H1 (cell line): ENCODE measurements at regions of chr11 and their contacts with region 1.

Region 1: DNA sequence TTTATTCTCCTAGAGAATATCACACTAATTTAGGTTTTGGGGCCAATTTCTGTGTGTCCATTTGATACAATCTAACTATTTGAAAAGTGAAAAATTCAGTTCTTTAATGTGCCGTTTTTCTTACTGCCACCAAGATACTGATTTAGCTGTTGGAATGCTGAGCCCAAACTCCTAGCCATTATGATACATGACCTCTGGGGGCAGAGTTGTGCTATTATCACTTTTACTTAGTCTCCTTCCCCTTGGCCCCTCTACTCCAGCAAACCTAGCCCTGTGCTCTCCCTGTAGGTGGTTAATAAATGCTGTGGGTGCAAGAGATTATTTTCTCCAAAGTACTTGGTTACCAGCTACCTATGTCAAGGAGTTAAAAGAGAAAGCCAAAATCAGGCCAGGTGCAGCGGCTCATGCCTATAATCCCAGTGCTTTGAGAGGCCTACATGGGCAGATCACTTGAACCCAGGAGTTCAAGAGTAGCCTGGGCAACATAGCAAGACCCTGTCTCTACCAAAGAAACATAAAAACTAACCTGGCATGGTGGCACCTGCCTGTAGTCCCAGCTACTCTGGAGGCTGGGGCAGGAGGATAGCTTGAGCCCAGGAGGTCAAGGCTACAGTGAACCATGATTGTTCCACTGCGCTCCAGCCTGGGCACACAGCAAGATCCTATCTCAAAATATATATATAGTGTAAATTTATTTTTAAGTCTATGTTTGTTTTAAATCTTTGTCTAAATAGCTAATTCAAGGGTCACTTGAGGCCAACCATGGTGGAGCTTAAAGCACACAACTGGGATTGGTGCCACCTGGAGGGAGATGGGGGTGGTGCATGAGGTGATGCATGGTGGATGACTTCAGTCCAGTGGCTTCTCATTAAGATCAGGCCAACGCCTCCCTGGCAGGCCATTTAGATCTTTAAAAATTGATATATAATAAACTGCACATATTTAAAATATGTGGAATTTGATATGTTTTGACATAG is 193.2 kb upstream of the PLET1 start:
- DNase-seq: peak; percentile 10 to 85
- H3K4me3 ChIP-seq: no peak overlapping the region
- H3K27ac ChIP-seq: no peak overlapping the region
- H3K4me1 ChIP-seq: no peaks in the 10 kb centered on the region
- H3K27me3 ChIP-seq: no peaks in the 10 kb centered on the region; a peak in 1 of 7 replicates
- CTCF ChIP-seq: peak; percentile 66 to 81 (median 73)
- EP300 ChIP-seq: no peak
- POLR2A ChIP-seq: no peak
- RAD21 ChIP-seq: peak; percentile 47 to 59

Region 2: GRCh38 chr11:111975076-111975806 is 478.6 kb before region 1 on chr11:
- CTCF ChIA-PET with region 1: no interaction called
- POLR2A ChIA-PET with region 1: no interaction called
- DNase-seq: no peak
- H3K4me3 ChIP-seq: no peak overlapping the region
- H3K27ac ChIP-seq: no peak overlapping the region
- H3K4me1 ChIP-seq: peaks cover 6 to 10% (median 7%) of the 10 kb centered on the region in 4 experiments; a peak in 6 of 7 replicates
- H3K27me3 ChIP-seq: peaks cover 0 to 3% (median 0%) of the 10 kb centered on the region in 4 experiments; a peak in 3 of 7 replicates
- CTCF ChIP-seq: peak in 1 of 3 experiments; percentile 12; a peak in 1 of 4 replicates
- EP300 ChIP-seq: no peak
- POLR2A ChIP-seq: no peak
- RAD21 ChIP-seq: no peak

Region 3: DNA sequence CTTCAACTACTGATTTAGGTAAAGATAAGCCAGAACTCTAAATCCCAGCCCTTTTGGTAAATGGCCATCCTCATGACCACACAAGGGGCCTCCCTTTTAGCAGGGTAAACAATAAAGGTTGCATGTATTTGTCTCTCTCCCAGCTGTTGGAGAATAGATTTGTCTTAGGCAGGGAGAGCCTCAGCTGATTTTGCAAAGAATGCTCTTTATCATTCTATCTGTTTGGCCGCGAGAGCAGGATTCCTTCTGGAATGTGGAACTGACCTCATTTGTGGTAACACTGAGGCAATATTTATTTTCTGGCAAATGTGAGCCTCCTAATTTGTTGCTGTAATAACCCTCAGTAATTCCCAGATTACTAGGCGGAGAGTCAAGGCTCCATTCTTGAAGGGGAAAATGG is 212.4 kb before region 1 on chr11:
- CTCF ChIA-PET with region 1: no interaction called
- POLR2A ChIA-PET with region 1: no interaction called
- DNase-seq: no peak
- H3K4me3 ChIP-seq: no peak overlapping the region
- H3K27ac ChIP-seq: no peak overlapping the region
- H3K4me1 ChIP-seq: no peaks in the 10 kb centered on the region
- H3K27me3 ChIP-seq: no peaks in the 10 kb centered on the region
- CTCF ChIP-seq: no peak
- EP300 ChIP-seq: no peak
- POLR2A ChIP-seq: no peak
- RAD21 ChIP-seq: no peak

Region 4: DNA sequence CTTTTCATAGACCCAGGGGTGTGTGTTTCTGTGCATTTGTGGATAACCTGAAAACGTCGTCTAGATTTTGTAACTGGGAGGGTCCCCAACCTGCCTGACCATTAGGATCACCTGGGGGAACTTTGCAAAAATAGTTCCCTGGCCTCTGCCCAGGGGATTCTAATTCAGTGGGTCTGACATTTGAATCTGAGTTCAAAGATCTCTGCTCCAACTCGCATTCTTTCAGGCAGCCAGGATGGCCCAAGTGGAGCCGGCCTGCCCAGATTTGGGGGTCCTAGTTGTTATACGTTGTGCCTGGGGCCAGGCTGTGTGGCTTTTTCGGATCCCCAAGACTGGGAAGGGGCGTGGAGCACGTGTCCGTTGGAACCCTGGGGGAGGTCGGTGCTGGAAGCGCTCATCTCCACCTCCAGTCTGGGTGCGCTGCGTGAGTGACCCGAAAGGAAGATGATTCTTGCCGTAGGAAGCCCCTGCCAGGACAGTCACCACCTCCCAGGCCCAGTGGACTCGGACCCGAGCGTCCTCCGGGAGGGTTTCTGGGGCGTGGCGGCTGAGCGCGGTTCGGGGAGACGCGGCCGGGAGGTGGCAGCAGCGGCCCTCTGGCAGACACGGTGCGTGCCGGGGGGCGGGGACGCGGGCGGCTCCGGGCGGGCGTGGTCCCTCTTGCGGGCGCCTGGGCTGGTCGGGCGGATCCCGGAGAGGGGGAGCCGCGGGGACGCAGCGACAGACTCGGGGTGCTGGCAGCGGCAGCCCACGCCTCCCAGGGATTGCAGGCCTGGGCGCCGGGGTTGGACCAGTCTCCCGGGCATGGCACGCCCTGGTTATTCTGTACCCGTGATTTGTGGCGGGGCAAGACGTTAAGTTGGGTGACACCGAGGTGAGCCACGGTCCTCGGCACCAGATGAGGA is 164.0 kb before region 1 on chr11:
- CTCF ChIA-PET with region 1: interaction called, 18 read pairs
- POLR2A ChIA-PET with region 1: no interaction called
- DNase-seq: peak in 1 of 2 experiments; percentile 94
- H3K4me3 ChIP-seq: peak overlapping the region; percentile 39 to 71 (median 60)
- H3K27ac ChIP-seq: no peak overlapping the region
- H3K4me1 ChIP-seq: peaks cover 0 to 5% (median 2%) of the 10 kb centered on the region in 4 experiments; a peak in 3 of 7 replicates
- H3K27me3 ChIP-seq: peaks cover 0 to 7% (median 1%) of the 10 kb centered on the region in 4 experiments; a peak in 4 of 7 replicates
- CTCF ChIP-seq: peak; percentile 76 to 93 (median 87)
- EP300 ChIP-seq: no peak
- POLR2A ChIP-seq: no peak
- RAD21 ChIP-seq: peak; percentile 79 to 91

Region 5: DNA sequence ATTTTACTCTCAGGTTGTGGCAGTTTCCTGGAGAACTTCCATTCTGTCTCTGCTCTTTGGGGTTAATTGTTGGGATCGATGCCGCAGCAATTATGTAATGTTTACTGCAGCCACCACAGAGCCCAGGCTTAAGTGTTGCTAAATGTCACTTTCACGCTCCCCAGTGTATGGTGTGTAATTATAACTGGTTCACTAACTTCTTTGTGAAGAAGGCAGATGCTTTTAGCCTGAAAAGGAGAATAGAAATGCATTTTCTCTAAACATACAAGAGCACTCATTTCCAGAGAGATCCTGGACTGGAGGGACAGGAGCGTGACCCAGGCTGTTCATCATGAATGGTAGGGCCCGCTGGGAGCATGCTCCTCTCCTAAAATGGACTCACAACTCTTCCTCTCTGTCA is 61.0 kb before region 1 on chr11:
- CTCF ChIA-PET with region 1: no interaction called
- POLR2A ChIA-PET with region 1: no interaction called
- DNase-seq: no peak
- H3K4me3 ChIP-seq: no peak overlapping the region
- H3K27ac ChIP-seq: no peak overlapping the region
- H3K4me1 ChIP-seq: no peaks in the 10 kb centered on the region
- H3K27me3 ChIP-seq: no peaks in the 10 kb centered on the region
- CTCF ChIP-seq: no peak
- EP300 ChIP-seq: no peak
- POLR2A ChIP-seq: no peak
- RAD21 ChIP-seq: no peak

Region 6: DNA sequence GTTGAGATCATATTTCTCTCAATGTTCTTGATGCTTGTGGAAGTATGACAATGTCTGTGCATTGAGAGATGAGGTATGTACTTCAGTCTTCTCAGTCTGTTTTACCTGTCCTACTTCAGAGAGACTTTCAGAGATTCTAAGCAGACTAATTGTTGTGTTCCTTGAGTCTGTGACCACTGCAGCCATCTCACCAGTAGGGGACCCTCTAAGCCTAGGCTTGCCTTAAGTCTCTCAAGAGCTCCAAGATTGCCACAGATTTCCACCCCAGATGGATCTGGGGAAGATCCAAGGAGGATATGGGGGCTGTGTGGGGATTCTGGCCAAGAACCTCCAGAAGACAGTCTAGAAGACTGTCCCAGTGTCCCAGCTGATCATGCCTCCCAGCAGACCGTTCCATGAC is 13.4 kb before region 1 on chr11:
- CTCF ChIA-PET with region 1: interaction called, 43 read pairs
- POLR2A ChIA-PET with region 1: no interaction called
- DNase-seq: peak in 1 of 2 experiments; percentile 29
- H3K4me3 ChIP-seq: no peak overlapping the region
- H3K27ac ChIP-seq: no peak overlapping the region
- H3K4me1 ChIP-seq: no peaks in the 10 kb centered on the region
- H3K27me3 ChIP-seq: peaks cover 0 to 1% (median 0%) of the 10 kb centered on the region in 4 experiments; a peak in 2 of 7 replicates
- CTCF ChIP-seq: peak; percentile 40 to 93 (median 86)
- EP300 ChIP-seq: no peak
- POLR2A ChIP-seq: no peak
- RAD21 ChIP-seq: peak; percentile 96 to 99

Region 7: DNA sequence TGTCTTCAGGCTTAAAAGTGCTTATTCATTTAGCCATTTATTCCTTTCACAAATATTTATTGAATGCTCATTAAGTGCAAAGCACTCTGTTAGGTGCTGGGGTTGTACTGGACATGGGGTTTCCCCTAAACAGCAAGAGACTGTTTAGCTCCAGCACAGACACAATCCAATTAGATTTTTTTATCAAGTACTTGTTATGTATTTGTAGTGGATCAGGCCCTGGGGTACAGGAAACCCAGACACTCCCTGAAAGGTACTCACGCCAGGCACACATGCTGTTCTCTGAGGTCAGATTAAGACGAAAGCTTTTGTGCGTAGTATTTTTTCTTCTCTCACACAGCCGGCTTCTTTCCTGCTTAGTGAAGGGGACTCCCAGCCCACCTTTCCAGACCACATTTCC is 24.9 kb after region 1 on chr11:
- CTCF ChIA-PET with region 1: interaction called, 31 read pairs
- POLR2A ChIA-PET with region 1: no interaction called
- DNase-seq: no peak
- H3K4me3 ChIP-seq: no peak overlapping the region
- H3K27ac ChIP-seq: no peak overlapping the region
- H3K4me1 ChIP-seq: peaks cover 0 to 3% (median 0%) of the 10 kb centered on the region in 4 experiments; a peak in 3 of 7 replicates
- H3K27me3 ChIP-seq: peaks cover 0 to 2% (median 0%) of the 10 kb centered on the region in 4 experiments; a peak in 1 of 7 replicates
- CTCF ChIP-seq: no peak
- EP300 ChIP-seq: no peak
- POLR2A ChIP-seq: no peak
- RAD21 ChIP-seq: no peak

Region 8: GRCh38 chr11:112511271-112511670 is 57.4 kb after region 1 on chr11:
- CTCF ChIA-PET with region 1: interaction called, 14 read pairs
- POLR2A ChIA-PET with region 1: no interaction called
- DNase-seq: peak in 1 of 2 experiments; percentile 2
- H3K4me3 ChIP-seq: no peak overlapping the region
- H3K27ac ChIP-seq: no peak overlapping the region
- H3K4me1 ChIP-seq: peaks cover 0 to 2% (median 0%) of the 10 kb centered on the region in 4 experiments; a peak in 2 of 7 replicates
- H3K27me3 ChIP-seq: no peaks in the 10 kb centered on the region
- CTCF ChIP-seq: no peak
- EP300 ChIP-seq: no peak
- POLR2A ChIP-seq: no peak
- RAD21 ChIP-seq: no peak

Region 9: DNA sequence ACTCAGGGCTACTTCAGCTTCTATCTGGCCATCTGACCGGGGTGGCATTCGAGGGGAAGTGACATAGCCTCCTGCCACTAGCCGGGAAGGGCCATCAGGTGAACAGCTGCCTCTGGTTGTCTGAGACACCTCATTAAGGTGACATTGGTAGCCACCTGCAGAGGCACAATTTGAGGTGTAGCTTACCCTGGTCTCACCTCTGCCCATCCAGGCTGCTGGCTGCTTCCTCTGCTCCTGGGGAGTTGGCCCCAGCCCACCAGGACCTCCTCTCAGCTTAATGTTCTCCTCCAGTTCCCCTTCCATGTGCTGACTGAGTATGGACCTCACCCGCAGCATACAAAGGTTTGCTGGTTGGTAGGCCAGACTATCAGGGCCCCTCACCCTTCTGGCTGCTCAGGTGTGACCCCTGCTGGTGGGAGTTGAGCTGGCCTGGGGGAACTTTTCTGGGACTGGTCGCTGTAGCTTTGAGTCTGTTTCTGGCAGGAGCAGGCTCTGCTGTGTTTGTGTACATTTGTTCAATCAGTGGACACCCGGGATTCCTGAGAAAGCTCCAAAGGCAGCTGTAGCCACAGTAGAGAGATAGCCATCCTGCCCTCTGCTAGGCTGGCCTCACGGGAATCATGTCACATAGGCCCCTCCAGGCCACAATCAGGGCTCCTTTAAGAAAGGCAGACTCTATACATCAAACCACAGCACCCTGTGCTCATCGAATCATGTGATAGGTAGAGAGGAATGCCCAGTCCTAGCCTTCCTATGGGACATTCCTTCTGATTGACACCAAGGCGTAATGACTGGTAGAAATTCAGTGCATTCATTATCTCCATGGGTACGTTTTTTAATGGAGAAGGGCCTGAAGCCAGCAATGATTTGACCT is 101.8 kb after region 1 on chr11:
- CTCF ChIA-PET with region 1: interaction called, 57 read pairs
- POLR2A ChIA-PET with region 1: no interaction called
- DNase-seq: peak; percentile 17 to 94
- H3K4me3 ChIP-seq: no peak overlapping the region
- H3K27ac ChIP-seq: no peak overlapping the region
- H3K4me1 ChIP-seq: no peaks in the 10 kb centered on the region; a peak in 1 of 7 replicates
- H3K27me3 ChIP-seq: no peaks in the 10 kb centered on the region
- CTCF ChIP-seq: peak; percentile 85 to 94 (median 89)
- EP300 ChIP-seq: no peak
- POLR2A ChIP-seq: no peak
- RAD21 ChIP-seq: peak; percentile 80 to 82

Region 10: DNA sequence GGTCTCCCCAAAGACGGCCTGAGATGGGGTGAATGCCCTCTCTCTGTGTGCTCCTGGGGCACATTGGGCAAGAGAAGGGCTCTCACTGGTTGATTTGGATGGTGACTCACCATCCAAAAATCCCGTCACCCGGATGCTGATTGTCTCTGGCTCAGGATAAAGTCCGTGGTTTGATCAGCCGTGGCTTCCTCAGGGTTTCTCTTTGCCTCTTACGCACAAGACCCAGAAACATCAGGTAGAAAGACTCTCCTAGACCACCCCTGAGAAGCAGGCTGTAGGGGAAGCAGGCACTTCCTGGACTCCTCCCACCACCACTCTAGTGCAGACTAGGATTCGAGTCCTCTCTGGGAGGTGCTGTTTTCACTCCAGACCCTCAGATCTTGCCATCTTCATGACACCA is 331.3 kb after region 1 on chr11:
- CTCF ChIA-PET with region 1: no interaction called
- POLR2A ChIA-PET with region 1: no interaction called
- DNase-seq: no peak
- H3K4me3 ChIP-seq: no peak overlapping the region
- H3K27ac ChIP-seq: no peak overlapping the region
- H3K4me1 ChIP-seq: peaks cover 0 to 7% (median 2%) of the 10 kb centered on the region in 4 experiments; a peak in 3 of 7 replicates
- H3K27me3 ChIP-seq: no peaks in the 10 kb centered on the region
- CTCF ChIP-seq: no peak
- EP300 ChIP-seq: no peak
- POLR2A ChIP-seq: no peak
- RAD21 ChIP-seq: no peak